CD14-positive monocyte (primary cell): ENCODE measurements at regions of chr3 and their contacts with region 1.

Region 1: GRCh38 chr3:136149667-136150066 is 46.5 kb downstream of the MSL2 start:
- DNase-seq: no peak
- H3K4me3 ChIP-seq: no peak overlapping the region
- H3K4me3 Mint-ChIP-seq: no peak overlapping the region
- H3K27ac ChIP-seq: no peak overlapping the region
- H3K27ac Mint-ChIP-seq: peak overlapping the region in 1 of 7 donors; percentile 80
- H3K4me1 ChIP-seq: no peaks in the 10 kb centered on the region
- H3K4me1 Mint-ChIP-seq: peaks cover 6% of the 10 kb centered on the region
- H3K27me3 ChIP-seq: no peaks in the 10 kb centered on the region
- H3K27me3 Mint-ChIP-seq: no peaks in the 10 kb centered on the region
- CTCF ChIP-seq: no peak

Region 2: DNA sequence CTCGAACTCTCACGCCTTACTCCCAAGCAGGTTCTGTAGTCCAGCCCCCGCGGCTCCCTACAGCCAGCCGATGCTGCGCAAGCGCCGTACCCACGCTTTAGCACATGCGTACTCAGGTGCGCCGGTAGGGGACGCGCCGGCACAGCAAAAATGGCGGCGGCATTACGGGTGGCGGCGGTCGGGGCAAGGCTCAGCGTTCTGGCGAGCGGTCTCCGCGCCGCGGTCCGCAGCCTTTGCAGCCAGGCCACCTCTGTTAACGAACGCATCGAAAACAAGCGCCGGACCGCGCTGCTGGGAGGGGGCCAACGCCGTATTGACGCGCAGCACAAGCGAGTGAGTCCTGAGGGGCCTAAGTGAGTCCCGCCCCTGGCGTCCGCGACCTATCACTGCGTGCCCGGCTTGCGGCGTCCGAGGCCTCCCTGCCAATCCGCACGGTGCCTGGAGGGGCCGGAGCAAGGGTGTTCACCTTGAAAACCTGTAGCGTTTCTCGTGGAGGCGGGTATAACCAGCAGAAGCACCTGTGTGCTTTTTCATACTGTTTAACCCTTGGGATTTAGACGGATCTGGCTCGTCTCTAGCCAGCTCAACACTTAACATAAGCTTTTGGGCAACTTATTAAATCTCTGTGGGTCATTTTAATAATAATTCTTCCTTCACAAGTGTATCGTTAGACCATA is 100.7 kb after region 1 on chr3 and contains the start of gene PCCB:
- intact Hi-C with region 1: loop called in 1 of 2 experiments (anchors 10 kb)
- DNase-seq: peak; percentile 87 to 92 (median 89)
- H3K4me3 ChIP-seq: peak within 1 kb of the TSS; percentile 58 to 83 (median 69)
- H3K4me3 Mint-ChIP-seq: peak within 1 kb of the TSS; percentile 86 to 91
- H3K27ac ChIP-seq: peak within 1 kb of the TSS; percentile 76 to 79
- H3K27ac Mint-ChIP-seq: peak within 1 kb of the TSS; percentile 79 to 95 (median 92)
- H3K4me1 ChIP-seq: peaks cover 16% of the 10 kb centered on the region in 2 donors
- H3K4me1 Mint-ChIP-seq: peaks cover 22% of the 10 kb centered on the region
- H3K27me3 ChIP-seq: no peaks in the 10 kb centered on the region
- H3K27me3 Mint-ChIP-seq: peaks cover under 1 to 3% (median 1%) of the 10 kb centered on the region in 3 donors
- CTCF ChIP-seq: peak; percentile 87
- polyA plus RNA-seq, gene PCCB: 13.1 to 41.7 (median 31.6) TPM